Naive thymus-derived CD4-positive, alpha-beta T cell (primary cell): ENCODE measurements at regions of chr6 and their contacts with region 1.

Region 1: DNA sequence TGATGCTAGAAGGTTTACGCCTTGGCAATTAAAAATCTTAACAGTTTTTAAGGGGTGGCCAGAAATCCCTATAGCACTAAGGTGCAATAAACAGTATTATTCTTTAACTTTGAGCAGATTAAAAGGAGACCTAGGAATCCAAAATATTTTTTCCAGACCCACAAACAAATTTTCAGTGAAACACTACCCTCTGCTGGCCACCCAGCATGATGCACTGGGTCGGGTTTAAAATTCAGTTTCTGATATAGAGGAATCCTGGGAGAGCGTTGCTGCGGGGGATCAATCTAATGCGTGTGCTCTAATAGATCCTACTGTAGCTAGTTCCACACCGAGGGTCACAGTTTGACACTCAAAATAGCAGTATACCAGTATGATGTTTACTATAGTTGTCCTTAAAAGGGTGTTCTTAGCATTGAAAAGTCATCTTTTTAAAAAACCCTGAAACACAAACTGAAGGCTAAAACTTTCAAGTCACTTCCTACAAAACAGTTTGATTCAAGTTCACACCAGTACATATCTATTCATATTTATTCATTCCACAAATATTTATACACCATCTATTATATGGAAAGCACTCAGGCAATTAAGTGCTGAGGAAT is 10.2 kb downstream of the UBE3D start:
- DNase-seq: peak in 5 of 9 donors; percentile 18 to 44 (median 39)
- ATAC-seq: peak; percentile 78
- H3K4me3 ChIP-seq: no peak overlapping the region
- H3K4me3 Mint-ChIP-seq: no peak overlapping the region
- H3K27ac ChIP-seq: no peak overlapping the region
- H3K27ac Mint-ChIP-seq: no peak overlapping the region
- H3K4me1 ChIP-seq: no peaks in the 10 kb centered on the region
- H3K4me1 Mint-ChIP-seq: peaks cover 0 to 9% (median 5%) of the 10 kb centered on the region in 7 donors
- H3K27me3 ChIP-seq: no peaks in the 10 kb centered on the region
- H3K27me3 Mint-ChIP-seq: no peaks in the 10 kb centered on the region

Region 2: GRCh38 chr6:82247634-82248232 is 807.7 kb before region 1 on chr6 and contains the start of gene IBTK:
- CTCF ChIA-PET with region 1: interaction called, 6 read pairs
- POLR2A ChIA-PET with region 1: no interaction called
- intact Hi-C with region 1: loop called (anchors 1 kb)
- DNase-seq: peak; percentile 86 to 97 (median 92)
- ATAC-seq: peak; percentile 97
- H3K4me3 ChIP-seq: peak within 1 kb of the TSS; percentile 87
- H3K4me3 Mint-ChIP-seq: peak within 1 kb of the TSS; percentile 92 to 99 (median 98)
- H3K27ac ChIP-seq: peak within 1 kb of the TSS; percentile 85
- H3K27ac Mint-ChIP-seq: peak within 1 kb of the TSS; percentile 93 to 99 (median 97)
- H3K4me1 ChIP-seq: peaks cover 12 to 15% of the 10 kb centered on the region in 2 donors
- H3K4me1 Mint-ChIP-seq: peaks cover 20 to 51% (median 42%) of the 10 kb centered on the region in 7 donors
- H3K27me3 ChIP-seq: no peaks in the 10 kb centered on the region
- H3K27me3 Mint-ChIP-seq: no peaks in the 10 kb centered on the region
- total RNA-seq, gene IBTK: 16.6 to 35.8 (median 26.1) TPM